Activated B cell treated with CpG ODN at 0.5 μM for 24 hours (primary cell): ENCODE measurements at regions of chr11 and their contacts with region 1.

Region 1: GRCh38 chr11:110711776-110712658 is at the start of gene ARHGAP20:
- DNase-seq: peak; percentile 71
- ATAC-seq: peak; percentile 95
- H3K4me3 Mint-ChIP-seq: peak within 1 kb of the TSS; percentile 84
- H3K27ac Mint-ChIP-seq: no peak within 1 kb of the TSS
- H3K4me1 Mint-ChIP-seq: peaks cover 21% of the 10 kb centered on the region
- H3K27me3 Mint-ChIP-seq: peaks cover 42% of the 10 kb centered on the region
- CTCF ChIP-seq: no peak
- total RNA-seq, gene ARHGAP20: 0.11 and 0.17 TPM in 2 replicates

Region 2: GRCh38 chr11:110453684-110454354 is 258.2 kb before region 1 on chr11:
- CTCF ChIA-PET with region 1: no interaction called
- POLR2A ChIA-PET with region 1: no interaction called
- intact Hi-C with region 1: loop called (anchors 5 kb)
- DNase-seq: no peak
- ATAC-seq: no peak
- H3K4me3 Mint-ChIP-seq: no peak overlapping the region
- H3K27ac Mint-ChIP-seq: no peak overlapping the region
- H3K4me1 Mint-ChIP-seq: peaks cover 20% of the 10 kb centered on the region
- H3K27me3 Mint-ChIP-seq: no peaks in the 10 kb centered on the region
- CTCF ChIP-seq: no peak

Region 3: GRCh38 chr11:110793556-110793955 is 81.5 kb after region 1 on chr11:
- CTCF ChIA-PET with region 1: no interaction called
- POLR2A ChIA-PET with region 1: no interaction called
- intact Hi-C with region 1: no loop called
- DNase-seq: no peak
- ATAC-seq: no peak
- H3K4me3 Mint-ChIP-seq: no peak overlapping the region
- H3K27ac Mint-ChIP-seq: no peak overlapping the region
- H3K4me1 Mint-ChIP-seq: peaks cover 15% of the 10 kb centered on the region
- H3K27me3 Mint-ChIP-seq: peaks cover 4% of the 10 kb centered on the region
- CTCF ChIP-seq: no peak

Region 4: GRCh38 chr11:111177037-111177871 is 465.2 kb after region 1 on chr11:
- CTCF ChIA-PET with region 1: no interaction called
- POLR2A ChIA-PET with region 1: no interaction called
- intact Hi-C with region 1: loop called (anchors 5 kb)
- DNase-seq: peak; percentile 25
- ATAC-seq: peak; percentile 85
- H3K4me3 Mint-ChIP-seq: peak overlapping the region; percentile 62
- H3K27ac Mint-ChIP-seq: peak overlapping the region; percentile 93
- H3K4me1 Mint-ChIP-seq: peaks cover 77% of the 10 kb centered on the region
- H3K27me3 Mint-ChIP-seq: no peaks in the 10 kb centered on the region
- CTCF ChIP-seq: no peak